ENCODE measurements at regions of chr7 and their contacts with region 1.

Region 1: DNA sequence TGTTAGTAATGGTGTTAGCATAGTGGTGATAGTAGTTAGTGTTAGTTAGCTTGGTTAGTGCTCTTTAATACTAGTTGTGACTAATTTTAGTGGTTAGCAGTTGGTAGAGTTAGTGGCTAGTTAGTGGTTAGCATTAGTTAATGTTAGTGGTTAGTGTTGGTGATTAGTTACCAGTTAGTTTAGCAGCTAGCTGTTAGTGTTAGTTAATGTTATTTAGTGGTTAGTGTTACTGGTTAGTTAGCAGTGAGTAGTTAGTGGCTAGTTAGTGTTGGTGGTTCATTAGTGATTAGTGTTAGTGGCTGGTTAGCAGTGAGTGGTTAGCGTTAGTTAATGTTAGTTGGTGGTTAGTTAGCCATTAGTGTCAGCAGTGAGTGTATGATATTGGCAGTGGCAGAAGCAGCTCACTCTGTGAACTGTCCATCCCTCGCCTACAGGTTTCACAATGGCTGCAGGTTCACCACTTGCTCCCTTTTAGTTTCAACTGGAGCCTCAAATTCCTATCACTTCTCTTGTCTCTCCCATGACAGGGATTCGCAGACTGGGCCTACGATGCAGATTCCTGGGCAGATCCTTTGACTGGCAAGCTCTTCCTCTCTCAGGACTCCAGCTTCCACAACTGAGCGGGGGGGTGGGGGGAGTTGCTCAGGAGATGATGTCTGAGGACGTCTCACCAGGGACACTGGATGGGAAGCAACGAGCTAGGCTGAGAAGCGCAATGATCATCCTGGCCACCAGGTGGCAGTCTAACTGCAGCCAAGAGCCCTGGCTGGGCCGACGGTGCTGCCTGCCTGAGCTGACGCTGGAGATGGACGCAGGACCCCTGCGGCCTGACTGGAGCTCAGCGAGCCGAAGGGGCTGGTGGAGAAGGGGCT is 19.5 kb downstream of the GHRHR start:
- DNase-seq: no peak
- ATAC-seq: peak; percentile 98
- H3K4me3 ChIP-seq: no peak overlapping the region
- H3K27ac ChIP-seq: no peak overlapping the region
- H3K4me1 ChIP-seq: no peaks in the 10 kb centered on the region
- H3K27me3 ChIP-seq: peaks cover 0 to 1% of the 10 kb centered on the region in 2 experiments; a peak in 3 of 4 replicates
- CTCF ChIP-seq: peak; percentile 90 to 97 (median 90)
- EP300 ChIP-seq: no peak
- POLR2A ChIP-seq: no peak
- RAD21 ChIP-seq: peak; percentile 74

Region 2: DNA sequence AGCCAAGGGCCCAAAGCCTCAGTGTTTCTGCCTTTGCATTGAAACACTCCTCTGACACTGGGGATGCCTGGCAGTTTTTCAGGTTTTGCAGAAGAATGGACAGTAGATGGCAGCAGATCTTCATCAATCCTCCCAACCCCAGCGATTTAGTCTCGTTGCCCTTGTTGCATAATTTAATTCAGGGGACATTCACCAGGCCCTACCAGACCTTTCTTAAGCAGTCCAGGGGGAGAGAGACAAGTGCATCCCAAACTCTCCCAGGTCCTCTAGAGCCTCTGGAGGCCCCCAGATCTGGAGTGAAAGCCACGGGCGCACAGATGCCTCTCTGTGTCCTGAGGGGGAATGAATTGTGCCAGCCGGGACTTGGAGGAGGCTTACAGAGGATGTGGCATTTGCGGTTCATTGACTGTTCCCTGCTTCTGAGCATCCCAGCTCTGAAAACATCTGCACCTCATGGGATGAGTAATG is 182.5 kb before region 1 on chr7:
- CTCF ChIA-PET with region 1: interaction called, 16 read pairs
- POLR2A ChIA-PET with region 1: no interaction called
- RAD21 ChIA-PET with region 1: interaction called, 11 read pairs
- SMC1A ChIA-PET with region 1: interaction called, 5 read pairs
- in situ Hi-C with region 1: loop called (anchors 5 kb)
- intact Hi-C with region 1: loop called (anchors 2 kb)
- DNase-seq: peak; percentile 21
- ATAC-seq: peak; percentile 77
- H3K4me3 ChIP-seq: no peak overlapping the region
- H3K27ac ChIP-seq: no peak overlapping the region
- H3K4me1 ChIP-seq: peaks cover 18% of the 10 kb centered on the region
- H3K27me3 ChIP-seq: no peaks in the 10 kb centered on the region
- CTCF ChIP-seq: peak; percentile 60 to 91 (median 73)
- EP300 ChIP-seq: no peak
- POLR2A ChIP-seq: no peak
- RAD21 ChIP-seq: peak; percentile 83

Region 3: GRCh38 chr7:30869794-30870611 is 113.3 kb before region 1 on chr7:
- CTCF ChIA-PET with region 1: no interaction called
- POLR2A ChIA-PET with region 1: no interaction called
- RAD21 ChIA-PET with region 1: no interaction called
- SMC1A ChIA-PET with region 1: no interaction called
- in situ Hi-C with region 1: no loop called
- intact Hi-C with region 1: no loop called
- DNase-seq: no peak
- ATAC-seq: no peak
- H3K4me3 ChIP-seq: no peak overlapping the region
- H3K27ac ChIP-seq: no peak overlapping the region
- H3K4me1 ChIP-seq: no peaks in the 10 kb centered on the region
- H3K27me3 ChIP-seq: no peaks in the 10 kb centered on the region
- CTCF ChIP-seq: no peak
- EP300 ChIP-seq: no peak
- POLR2A ChIP-seq: no peak
- RAD21 ChIP-seq: no peak

Region 4: GRCh38 chr7:31027161-31027965 is 44.1 kb after region 1 on chr7:
- CTCF ChIA-PET with region 1: interaction called, 10 read pairs
- POLR2A ChIA-PET with region 1: no interaction called
- RAD21 ChIA-PET with region 1: no interaction called
- SMC1A ChIA-PET with region 1: no interaction called
- in situ Hi-C with region 1: no loop called
- intact Hi-C with region 1: no loop called
- DNase-seq: no peak
- ATAC-seq: peak; percentile 79
- H3K4me3 ChIP-seq: no peak overlapping the region
- H3K27ac ChIP-seq: no peak overlapping the region
- H3K4me1 ChIP-seq: no peaks in the 10 kb centered on the region; the same call in 1 of the 2 replicates
- H3K27me3 ChIP-seq: no peaks in the 10 kb centered on the region
- CTCF ChIP-seq: no peak
- EP300 ChIP-seq: no peak
- POLR2A ChIP-seq: no peak
- RAD21 ChIP-seq: no peak

Region 5: DNA sequence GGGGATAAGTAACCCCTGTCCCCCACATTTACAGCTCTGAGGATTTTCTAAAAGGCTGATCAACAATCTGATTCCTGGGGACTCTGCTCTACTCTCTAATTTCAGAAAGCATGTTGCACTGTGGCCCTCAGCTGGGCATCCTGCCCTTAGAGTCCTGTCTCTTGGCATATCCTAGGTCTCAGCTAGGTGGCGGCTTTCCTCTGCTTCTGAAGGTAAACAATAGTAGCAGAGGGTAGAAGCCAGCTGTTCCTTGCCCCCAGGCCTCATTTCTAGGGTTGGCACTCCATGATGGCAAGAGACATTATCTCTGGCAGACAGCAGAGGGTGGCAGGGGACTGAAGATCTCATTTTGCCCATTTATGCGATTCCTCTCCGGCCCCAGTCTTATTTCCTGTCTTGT is 145.8 kb after region 1 on chr7:
- CTCF ChIA-PET with region 1: interaction called, 398 read pairs
- POLR2A ChIA-PET with region 1: no interaction called
- RAD21 ChIA-PET with region 1: interaction called, 176 read pairs
- SMC1A ChIA-PET with region 1: interaction called, 146 read pairs
- in situ Hi-C with region 1: loop called (anchors 5 kb)
- intact Hi-C with region 1: no loop called
- DNase-seq: no peak
- ATAC-seq: peak; percentile 47
- H3K4me3 ChIP-seq: no peak overlapping the region
- H3K27ac ChIP-seq: no peak overlapping the region
- H3K4me1 ChIP-seq: no peaks in the 10 kb centered on the region
- H3K27me3 ChIP-seq: no peaks in the 10 kb centered on the region; a peak in 1 of 4 replicates
- CTCF ChIP-seq: peak in 2 of 3 experiments; percentile 11 to 20; a peak in 1 of 6 replicates
- EP300 ChIP-seq: no peak
- POLR2A ChIP-seq: no peak
- RAD21 ChIP-seq: no peak

Region 6: DNA sequence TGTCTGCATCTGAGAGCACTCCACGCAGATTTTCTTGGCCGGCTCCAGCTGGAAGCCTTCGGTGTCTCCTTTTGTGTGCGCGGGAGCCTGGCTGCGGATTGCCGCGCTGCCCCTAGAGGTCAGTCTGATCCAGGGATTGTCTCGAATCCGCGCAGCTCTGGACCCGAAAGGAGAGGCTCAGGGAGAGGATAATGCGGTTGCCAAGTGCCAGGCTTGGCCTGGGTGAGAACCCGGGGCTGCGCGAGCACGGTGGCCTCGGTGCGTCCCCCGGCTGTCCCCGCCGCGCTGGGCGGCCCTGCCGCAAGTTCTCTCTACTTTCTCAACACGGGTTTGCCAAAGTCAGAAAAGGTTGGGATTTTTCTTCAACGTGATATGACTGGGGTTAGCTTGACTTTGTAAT is 209.7 kb after region 1 on chr7:
- CTCF ChIA-PET with region 1: no interaction called
- POLR2A ChIA-PET with region 1: no interaction called
- RAD21 ChIA-PET with region 1: no interaction called
- SMC1A ChIA-PET with region 1: no interaction called
- in situ Hi-C with region 1: no loop called
- intact Hi-C with region 1: no loop called
- DNase-seq: no peak
- ATAC-seq: peak; percentile 57; the same call in 2 of the 3 replicates
- H3K4me3 ChIP-seq: no peak overlapping the region
- H3K27ac ChIP-seq: no peak overlapping the region
- H3K4me1 ChIP-seq: no peaks in the 10 kb centered on the region
- H3K27me3 ChIP-seq: no peaks in the 10 kb centered on the region
- CTCF ChIP-seq: peak; percentile 29 to 52 (median 45)
- EP300 ChIP-seq: no peak
- POLR2A ChIP-seq: no peak
- RAD21 ChIP-seq: peak; percentile 16; the same call in 1 of the 2 replicates

Region 7: DNA sequence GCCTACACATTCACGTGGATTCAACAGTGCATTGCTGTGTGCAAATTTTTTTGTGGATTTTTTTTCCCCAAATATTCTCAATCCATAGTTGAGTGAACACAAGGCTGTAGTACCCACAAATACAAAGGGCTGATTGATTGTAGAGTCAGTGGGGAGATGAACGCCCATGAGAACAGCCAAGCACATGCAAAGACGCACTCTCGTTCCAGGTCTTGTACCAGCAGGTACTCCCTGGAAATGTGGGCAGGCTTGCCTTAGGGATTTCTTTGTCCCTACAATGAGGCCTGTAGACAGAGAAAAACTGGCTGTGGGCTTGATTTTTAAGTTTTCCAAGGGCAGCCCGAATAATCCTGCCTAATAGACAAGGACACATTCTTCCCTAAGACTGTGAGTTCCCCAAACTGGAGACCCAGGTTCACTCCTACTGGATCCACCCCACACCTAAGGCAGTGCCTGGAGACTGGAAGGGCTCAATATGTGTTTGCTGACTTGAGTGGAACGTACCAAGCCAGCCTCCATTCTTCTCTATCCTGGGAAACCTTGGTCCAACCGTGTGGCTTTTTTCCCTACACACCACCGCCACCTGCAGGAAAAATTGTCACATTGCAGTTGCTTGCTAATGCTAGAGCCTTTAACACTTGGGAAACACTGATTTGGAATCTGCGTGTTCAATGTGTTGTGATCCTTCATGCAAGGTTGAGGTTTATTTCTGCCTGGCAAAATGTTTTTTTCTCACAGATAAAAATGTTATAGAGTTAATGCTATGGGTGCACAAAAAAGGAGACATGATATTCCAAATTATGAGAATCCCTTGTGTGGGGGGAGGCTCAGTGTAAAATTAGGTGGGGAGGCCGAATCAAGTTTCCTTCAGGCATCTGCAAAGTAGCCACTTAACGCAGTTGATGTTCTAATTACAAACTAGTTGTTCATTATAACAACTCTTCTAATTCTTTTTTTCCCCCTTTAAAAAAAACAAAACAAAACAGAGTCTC is 753.0 kb after region 1 on chr7:
- CTCF ChIA-PET with region 1: no interaction called
- POLR2A ChIA-PET with region 1: no interaction called
- RAD21 ChIA-PET with region 1: no interaction called
- SMC1A ChIA-PET with region 1: no interaction called
- in situ Hi-C with region 1: loop called (anchors 10 kb)
- intact Hi-C with region 1: no loop called
- DNase-seq: no peak
- ATAC-seq: peak; percentile 79
- H3K4me3 ChIP-seq: no peak overlapping the region
- H3K27ac ChIP-seq: no peak overlapping the region
- H3K4me1 ChIP-seq: no peaks in the 10 kb centered on the region
- H3K27me3 ChIP-seq: no peaks in the 10 kb centered on the region; a peak in 1 of 4 replicates
- CTCF ChIP-seq: peak; percentile 82 to 90 (median 86)
- EP300 ChIP-seq: no peak
- POLR2A ChIP-seq: no peak
- RAD21 ChIP-seq: peak; percentile 84